IMR-90 (cell line): ENCODE measurements at regions of chr11 and their contacts with region 1.

Region 1: GRCh38 chr11:71928737-71929452 is at the start of gene RNF121:
- DNase-seq: peak; percentile 92
- ATAC-seq: peak; percentile 99
- H3K4me3 ChIP-seq: peak within 1 kb of the TSS; percentile 79
- H3K27ac ChIP-seq: peak within 1 kb of the TSS; percentile 93
- H3K4me1 ChIP-seq: peaks cover 4% of the 10 kb centered on the region
- H3K27me3 ChIP-seq: no peaks in the 10 kb centered on the region
- CTCF ChIP-seq: no peak
- POLR2A ChIP-seq: peak; percentile 69
- RAD21 ChIP-seq: no peak
- total RNA-seq, gene RNF121: 65.8 and 88.7 TPM in 2 replicates

Region 2: DNA sequence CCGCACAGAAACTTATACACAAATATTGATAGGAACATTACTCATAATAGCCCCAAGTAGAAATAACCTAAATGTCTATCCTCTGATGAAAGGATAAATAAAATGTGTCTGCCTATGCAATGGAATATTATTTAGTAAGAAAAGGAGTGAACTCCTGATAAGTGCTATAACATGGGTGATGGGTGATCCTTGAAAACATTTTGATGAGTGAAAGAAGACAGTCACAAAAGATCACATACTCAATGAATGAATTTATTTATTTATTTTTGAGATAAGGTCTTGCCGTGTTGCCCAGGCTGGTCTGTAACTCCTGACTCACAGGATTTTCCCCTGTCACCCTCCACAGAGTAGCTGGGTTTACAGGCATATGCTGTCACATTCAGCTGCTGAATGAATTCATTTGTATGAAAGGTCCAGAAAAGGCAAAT is 17.3 kb after region 1 on chr11:
- CTCF ChIA-PET with region 1: no interaction called
- POLR2A ChIA-PET with region 1: no interaction called
- dilution Hi-C with region 1: no loop called
- in situ Hi-C with region 1: no loop called
- intact Hi-C with region 1: loop called (anchors 1 kb)
- DNase-seq: peak; percentile 78
- ATAC-seq: peak; percentile 53
- H3K4me3 ChIP-seq: no peak overlapping the region
- H3K27ac ChIP-seq: no peak overlapping the region
- H3K4me1 ChIP-seq: peaks cover 11% of the 10 kb centered on the region
- H3K27me3 ChIP-seq: no peaks in the 10 kb centered on the region
- CTCF ChIP-seq: no peak
- POLR2A ChIP-seq: no peak
- RAD21 ChIP-seq: no peak

Region 3: DNA sequence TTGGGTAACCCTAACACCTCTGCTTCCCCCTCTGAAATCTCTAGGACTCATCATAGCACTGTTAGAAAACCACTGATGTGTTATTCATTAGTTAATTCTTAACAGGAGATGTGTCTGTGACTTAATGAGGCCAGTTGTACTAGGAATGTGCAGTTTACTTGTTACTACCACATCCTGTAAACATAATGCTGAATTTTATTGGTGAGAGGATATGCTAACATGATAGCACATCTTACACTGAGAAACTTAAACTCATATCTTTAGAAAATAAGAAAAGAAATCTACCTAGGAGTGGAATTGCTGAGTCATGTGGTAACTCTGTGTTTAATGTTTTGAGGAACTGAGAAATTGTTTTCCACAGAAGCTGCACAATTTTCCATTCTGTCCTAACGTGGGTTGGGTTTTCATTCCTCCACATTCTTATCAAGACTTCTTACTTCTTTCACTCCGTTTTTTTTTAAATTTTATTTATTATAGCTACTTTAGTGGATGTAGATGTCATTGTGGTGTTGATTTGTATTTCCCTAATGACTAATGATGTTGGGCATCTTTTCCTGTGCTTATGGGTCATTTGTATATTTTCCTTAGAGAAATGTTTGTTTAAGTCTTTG is 33.6 kb after region 1 on chr11:
- CTCF ChIA-PET with region 1: no interaction called
- POLR2A ChIA-PET with region 1: no interaction called
- dilution Hi-C with region 1: no loop called
- in situ Hi-C with region 1: no loop called
- intact Hi-C with region 1: no loop called
- DNase-seq: peak; percentile 65
- ATAC-seq: peak; percentile 80
- H3K4me3 ChIP-seq: no peak overlapping the region
- H3K27ac ChIP-seq: no peak overlapping the region; the same call in 1 of the 2 replicates
- H3K4me1 ChIP-seq: peaks cover 2% of the 10 kb centered on the region; the same call in 1 of the 2 replicates
- H3K27me3 ChIP-seq: no peaks in the 10 kb centered on the region
- CTCF ChIP-seq: no peak
- POLR2A ChIP-seq: no peak
- RAD21 ChIP-seq: no peak

Region 4: DNA sequence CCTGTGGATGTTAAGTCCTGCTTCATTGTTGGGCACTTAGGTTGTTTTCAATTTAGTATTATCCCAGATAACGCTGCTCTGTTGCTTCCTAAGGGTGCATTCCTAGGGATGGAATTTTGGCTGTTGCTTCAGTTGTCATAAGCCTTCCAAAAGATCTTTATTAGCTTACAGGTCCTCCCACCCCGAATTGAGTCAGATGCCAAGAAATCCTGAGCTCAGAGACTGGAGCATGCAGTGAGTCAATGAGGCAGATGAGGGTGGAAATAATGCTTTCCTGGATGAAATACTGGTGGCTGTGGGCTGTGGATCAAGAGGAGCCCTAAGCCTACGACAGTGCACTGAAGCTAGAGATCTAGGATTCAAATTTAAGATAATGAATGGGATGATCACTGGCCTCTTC is 59.2 kb after region 1 on chr11:
- CTCF ChIA-PET with region 1: no interaction called
- POLR2A ChIA-PET with region 1: no interaction called
- dilution Hi-C with region 1: no loop called
- in situ Hi-C with region 1: loop called (anchors 10 kb)
- intact Hi-C with region 1: no loop called
- DNase-seq: peak; percentile 87
- ATAC-seq: peak; percentile 88
- H3K4me3 ChIP-seq: no peak overlapping the region
- H3K27ac ChIP-seq: no peak overlapping the region; the same call in 1 of the 2 replicates
- H3K4me1 ChIP-seq: peaks cover 9% of the 10 kb centered on the region
- H3K27me3 ChIP-seq: no peaks in the 10 kb centered on the region
- CTCF ChIP-seq: no peak
- POLR2A ChIP-seq: no peak
- RAD21 ChIP-seq: no peak